Adrenal gland (tissue), 19 donors: ENCODE measurements at regions of chr10 and their contacts with region 1.

Region 1: GRCh38 chr10:69800109-69800508 is 1.6 kb upstream of the COL13A1 start:
- DNase-seq: peak; percentile 33 to 61 (median 42)
- H3K4me3 ChIP-seq: no peak overlapping the region
- H3K27ac ChIP-seq: no peak overlapping the region
- H3K4me1 ChIP-seq: peaks cover 13 to 19% of the 10 kb centered on the region in 2 donors
- H3K27me3 ChIP-seq: peaks cover 25% of the 10 kb centered on the region
- CTCF ChIP-seq: peak; percentile 41 to 62 (median 54)
- POLR2A ChIP-seq: no peak

Region 2: DNA sequence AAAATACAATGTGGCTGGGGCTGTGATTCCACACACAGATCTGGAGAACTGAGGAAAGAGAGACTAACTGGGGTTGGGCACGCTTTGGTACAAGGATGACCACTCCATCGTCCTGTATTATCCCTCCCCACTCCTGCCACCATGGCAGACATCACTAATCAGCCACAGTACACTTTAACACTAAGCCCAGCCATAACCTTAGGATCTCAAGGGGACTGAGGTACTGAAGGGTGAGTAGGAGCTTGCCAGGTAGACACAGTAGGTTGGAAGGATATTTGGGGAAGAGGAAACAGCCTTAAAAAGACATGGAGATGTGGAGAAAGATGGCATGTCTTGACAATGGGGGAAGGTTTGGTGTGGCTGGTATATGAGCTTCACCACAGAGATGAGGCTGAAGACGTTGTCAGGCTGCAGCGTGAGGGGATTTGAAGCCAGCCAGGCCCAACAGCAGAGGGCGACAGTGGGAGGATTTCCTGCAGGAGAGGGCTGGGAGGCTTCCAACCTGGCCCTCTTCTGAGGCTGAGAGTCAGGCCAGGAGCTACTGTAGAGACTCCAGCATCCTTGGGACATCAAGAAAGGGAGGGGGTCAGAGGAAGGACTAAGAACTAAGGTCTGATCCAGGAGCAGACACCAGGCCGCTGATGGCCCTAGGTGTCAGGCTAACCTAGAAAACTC is 57.0 kb before region 1 on chr10:
- intact Hi-C with region 1: loop called (anchors 2 to 5 kb)
- DNase-seq: peak in 5 of 7 donors; percentile 28 to 69 (median 55)
- H3K4me3 ChIP-seq: no peak overlapping the region
- H3K27ac ChIP-seq: no peak overlapping the region
- H3K4me1 ChIP-seq: no peaks in the 10 kb centered on the region
- H3K27me3 ChIP-seq: no peaks in the 10 kb centered on the region
- CTCF ChIP-seq: peak in 4 of 6 experiments; percentile 20 to 47 (median 42)
- POLR2A ChIP-seq: no peak